Posterior vena cava (tissue), 2 donors: ENCODE measurements at regions of chr6 and their contacts with region 1.

Region 1: DNA sequence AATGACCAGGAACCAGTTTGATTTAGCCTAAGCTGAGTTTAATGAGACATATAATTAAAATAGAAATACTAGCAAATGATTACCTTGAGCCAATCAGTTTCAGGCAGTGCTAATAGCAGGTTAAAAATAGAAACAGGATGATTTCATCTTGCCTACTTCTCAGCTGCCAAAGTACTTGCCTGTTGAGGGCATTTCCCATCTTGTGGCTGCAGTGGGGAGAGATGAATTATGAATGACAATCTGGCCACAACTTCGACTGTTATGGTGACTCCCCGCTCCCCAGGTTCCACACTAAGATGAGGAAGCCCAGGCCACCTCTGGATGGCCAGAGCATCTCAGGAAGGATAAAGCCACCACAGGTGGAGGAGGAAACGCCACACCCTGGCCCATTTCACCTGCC is 31.3 kb downstream of the MBOAT1 start:
- DNase-seq: no peak

Region 2: GRCh38 chr6:19902201-19902971 is 278.5 kb before region 1 on chr6:
- intact Hi-C with region 1: loop called in 1 of 2 experiments (anchors 5 kb)
- DNase-seq: no peak

Region 3: DNA sequence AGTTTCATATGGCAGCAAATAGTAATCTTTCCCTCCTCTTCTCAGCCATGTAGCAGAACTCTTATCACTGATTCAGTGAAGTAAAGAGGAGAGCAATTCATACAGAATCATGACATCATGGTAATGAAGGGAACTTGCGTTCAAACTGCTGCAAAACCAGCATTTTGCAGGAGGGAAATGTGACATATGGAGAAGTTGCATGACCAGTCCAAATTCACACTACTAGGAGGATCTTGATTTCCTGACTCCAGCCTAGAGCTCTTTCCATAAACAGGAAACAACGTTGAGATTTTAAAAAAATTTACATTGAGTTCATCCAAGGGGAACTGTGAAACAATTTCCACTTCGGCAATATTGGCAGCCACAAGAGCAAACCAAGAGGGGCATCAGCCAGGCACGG is 32.5 kb before region 1 on chr6:
- intact Hi-C with region 1: loop called in 1 of 2 experiments (anchors 1 kb)
- DNase-seq: no peak

Region 4: DNA sequence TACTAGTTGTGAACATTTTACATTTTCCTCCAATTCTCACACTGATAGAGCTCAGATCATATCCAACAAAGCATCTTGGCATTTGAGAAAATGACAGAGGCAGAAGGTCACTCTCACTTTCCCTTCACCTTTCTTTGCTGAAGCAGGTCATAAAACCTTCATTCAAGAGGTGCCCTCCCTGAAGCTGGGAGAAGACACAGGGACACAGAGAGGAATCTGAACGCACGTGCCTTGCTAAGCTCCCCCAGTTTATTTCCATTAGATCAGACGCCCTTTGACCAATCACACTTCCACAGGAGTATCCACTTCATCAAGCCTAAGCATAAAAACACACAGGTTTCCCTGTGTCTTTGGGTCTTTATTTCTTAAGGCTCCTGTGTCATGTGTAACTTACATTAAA is 40.5 kb after region 1 on chr6:
- intact Hi-C with region 1: loop called in 1 of 2 experiments (anchors 1 kb)
- DNase-seq: no peak